Dorsolateral prefrontal cortex (tissue), 120 donors: ENCODE measurements at regions of chr1 and their contacts with region 1.

Region 1: DNA sequence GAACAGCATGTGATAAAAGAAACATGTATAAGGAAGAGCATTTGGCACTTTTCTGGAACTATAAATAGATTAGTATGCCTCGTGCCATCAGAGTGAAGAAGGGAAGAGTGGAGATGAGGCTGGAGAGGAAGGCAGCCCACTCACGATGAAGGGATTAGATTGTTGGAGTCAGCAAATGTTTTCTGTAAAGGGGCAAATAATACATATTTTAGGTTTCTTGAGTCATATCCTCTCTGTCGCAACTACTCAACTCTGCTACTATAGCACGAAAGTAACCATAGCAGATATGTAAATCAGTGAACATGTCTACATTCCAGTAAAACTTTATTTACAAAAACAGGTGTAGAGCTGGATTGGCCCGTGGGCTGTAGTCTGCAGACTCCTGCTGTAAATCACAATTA is 147.8 kb downstream of the TENT5C start:
- DNase-seq: no peak
- H3K4me3 ChIP-seq: peak overlapping the region in 17 of 59 donors; percentile 1 to 39 (median 20)
- H3K27ac ChIP-seq: no peak overlapping the region
- H3K27me3 ChIP-seq: peaks cover 0 to 13% (median 0%) of the 10 kb centered on the region in 45 donors
- CTCF ChIP-seq: no peak

Region 2: DNA sequence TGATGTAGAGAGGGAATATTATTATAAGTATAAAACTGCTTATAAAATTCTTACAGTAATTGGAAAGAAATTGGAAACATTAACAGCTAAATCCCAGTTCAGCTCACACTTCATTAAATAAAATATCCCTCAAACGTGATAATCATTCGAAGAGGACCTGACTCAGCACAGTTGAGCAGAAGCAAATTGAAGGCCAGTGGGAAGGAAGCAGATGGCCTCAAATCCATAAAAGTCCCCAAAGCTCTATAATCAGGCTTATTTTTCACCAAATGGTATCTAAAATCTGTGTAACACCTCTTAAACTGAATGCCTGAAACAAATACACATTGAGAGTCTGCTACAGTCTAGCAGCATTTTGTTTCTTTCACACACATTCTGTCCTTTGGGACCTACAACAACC is 41.0 kb before region 1 on chr1:
- intact Hi-C with region 1: loop called in 1 of 2 experiments (anchors 2 kb)
- DNase-seq: no peak
- H3K4me3 ChIP-seq: no peak overlapping the region
- H3K27ac ChIP-seq: no peak overlapping the region
- H3K27me3 ChIP-seq: peaks cover 0 to 4% (median 0%) of the 10 kb centered on the region in 45 donors
- CTCF ChIP-seq: no peak

Region 3: DNA sequence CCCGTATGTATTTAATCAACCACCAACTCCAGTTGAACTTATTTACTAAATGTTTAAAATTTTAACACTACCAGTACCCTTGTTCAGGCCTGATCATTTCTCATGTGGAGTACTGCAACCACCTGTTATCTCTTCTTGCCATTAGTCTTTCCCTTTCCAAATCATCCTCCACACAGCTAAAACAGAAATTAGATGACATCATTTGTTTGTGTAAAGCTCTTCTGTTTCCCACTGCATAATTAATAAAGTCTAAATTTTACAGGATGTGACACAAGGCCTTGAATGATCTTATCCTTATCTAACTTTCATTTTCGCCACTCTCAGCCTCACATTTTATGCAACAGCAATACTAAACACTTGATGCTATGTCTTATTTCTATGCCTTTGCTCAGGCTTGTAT is 151.4 kb after region 1 on chr1:
- intact Hi-C with region 1: no loop called
- DNase-seq: no peak
- H3K4me3 ChIP-seq: no peak overlapping the region
- H3K27ac ChIP-seq: no peak overlapping the region
- H3K27me3 ChIP-seq: no peaks in the 10 kb centered on the region
- CTCF ChIP-seq: no peak

Region 4: GRCh38 chr1:118012515-118013124 is 259.0 kb after region 1 on chr1:
- intact Hi-C with region 1: no loop called
- DNase-seq: no peak
- H3K4me3 ChIP-seq: no peak overlapping the region
- H3K27ac ChIP-seq: no peak overlapping the region
- H3K27me3 ChIP-seq: peaks cover 0 to 7% (median 0%) of the 10 kb centered on the region in 45 donors
- CTCF ChIP-seq: no peak

Region 5: GRCh38 chr1:118485757-118486156 is 732.1 kb after region 1 on chr1:
- intact Hi-C with region 1: no loop called
- DNase-seq: no peak
- H3K4me3 ChIP-seq: no peak overlapping the region
- H3K27ac ChIP-seq: no peak overlapping the region
- H3K27me3 ChIP-seq: peaks cover 0 to 4% (median 0%) of the 10 kb centered on the region in 45 donors
- CTCF ChIP-seq: no peak